Calu3 (cell line): ENCODE measurements at regions of chr5 and their contacts with region 1.

Region 1: DNA sequence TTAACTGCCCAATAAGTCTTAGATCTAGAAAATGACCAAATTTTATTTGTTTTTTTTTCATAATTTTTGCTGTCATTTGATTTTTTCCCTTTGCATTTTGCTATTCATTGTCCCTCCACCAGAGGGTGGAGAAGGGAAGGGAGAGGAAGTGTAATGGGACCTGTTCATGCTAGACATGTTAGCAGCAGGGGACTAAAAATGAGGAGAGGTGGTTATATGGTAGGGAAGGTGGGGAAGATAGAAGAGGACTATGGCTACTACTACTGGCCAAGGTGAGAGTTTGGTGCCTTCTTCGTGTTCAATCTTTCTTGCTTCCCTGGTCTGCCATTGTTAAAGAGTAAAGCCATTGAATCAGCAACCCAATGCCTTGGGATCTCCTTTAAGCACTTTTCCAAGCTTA is 6.4 kb downstream of the GRIA1 start:
- DNase-seq: peak; percentile 36
- H3K4me3 Mint-ChIP-seq: no peak overlapping the region
- H3K27ac Mint-ChIP-seq: no peak overlapping the region
- H3K4me1 Mint-ChIP-seq: no peaks in the 10 kb centered on the region
- H3K27me3 Mint-ChIP-seq: peaks cover 64% of the 10 kb centered on the region
- CTCF ChIP-seq: peak; percentile 57

Region 2: GRCh38 chr5:152532714-152533113 is 964.1 kb before region 1 on chr5:
- CTCF ChIA-PET with region 1: no interaction called
- intact Hi-C with region 1: loop called (anchors 5 kb)
- DNase-seq: peak; percentile 34
- H3K4me3 Mint-ChIP-seq: no peak overlapping the region
- H3K27ac Mint-ChIP-seq: no peak overlapping the region
- H3K4me1 Mint-ChIP-seq: no peaks in the 10 kb centered on the region
- H3K27me3 Mint-ChIP-seq: peaks cover 41% of the 10 kb centered on the region
- CTCF ChIP-seq: peak; percentile 61

Region 3: DNA sequence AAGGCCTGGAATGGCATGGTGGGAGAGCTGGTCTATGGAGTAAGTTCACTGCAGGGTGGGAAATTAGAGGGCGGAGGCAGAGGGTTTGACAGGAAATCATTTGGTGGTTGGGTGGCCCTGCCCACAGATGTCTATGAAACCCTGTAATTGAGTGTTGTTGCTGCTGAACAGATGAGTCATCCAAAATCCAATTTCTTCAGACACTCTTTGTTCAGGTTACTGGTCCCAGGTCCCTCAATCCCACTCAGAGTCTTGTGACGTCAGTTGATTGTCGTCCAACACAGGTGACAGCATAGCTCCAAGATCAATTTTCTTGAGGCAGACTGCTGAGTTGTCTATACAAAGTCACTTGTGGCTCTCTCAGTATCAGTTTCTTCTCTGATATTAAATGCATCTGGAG is 202.2 kb after region 1 on chr5:
- CTCF ChIA-PET with region 1: no interaction called
- intact Hi-C with region 1: loop called (anchors 10 kb)
- DNase-seq: no peak
- H3K4me3 Mint-ChIP-seq: no peak overlapping the region
- H3K27ac Mint-ChIP-seq: no peak overlapping the region
- H3K4me1 Mint-ChIP-seq: no peaks in the 10 kb centered on the region
- H3K27me3 Mint-ChIP-seq: peaks cover 42% of the 10 kb centered on the region
- CTCF ChIP-seq: no peak